ENCODE measurements at regions of chr1 and their contacts with region 1.

Region 1: DNA sequence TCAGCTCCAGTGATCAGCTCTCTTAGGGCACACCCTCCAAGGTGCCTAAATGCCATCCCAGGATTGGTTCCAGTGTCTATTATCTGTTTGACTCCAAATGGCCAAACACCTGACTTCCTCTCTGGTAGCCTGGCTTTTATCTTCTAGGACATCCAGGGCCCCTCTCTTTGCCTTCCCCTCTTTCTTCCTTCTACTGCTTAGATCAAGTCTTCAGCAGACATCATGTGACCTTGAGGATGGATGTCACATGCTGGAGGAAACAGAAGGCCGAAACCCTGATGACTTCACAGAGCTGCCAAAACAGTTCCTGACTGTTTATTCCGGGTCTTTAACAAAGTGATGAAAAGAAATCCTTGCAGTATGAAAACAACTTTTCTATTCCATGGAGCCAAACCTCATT is 24.4 kb upstream of the WDR26 start:
- DNase-seq: no peak
- H3K4me3 ChIP-seq: no peak overlapping the region
- H3K27ac ChIP-seq: no peak overlapping the region
- H3K27me3 ChIP-seq: no peaks in the 10 kb centered on the region
- CTCF ChIP-seq: no peak

Region 2: GRCh38 chr1:224116131-224116530 is 342.9 kb before region 1 on chr1:
- CTCF ChIA-PET with region 1: interaction called, 20 read pairs
- POLR2A ChIA-PET with region 1: no interaction called
- DNase-seq: peak; percentile 21
- H3K4me3 ChIP-seq: no peak overlapping the region; the same call in 1 of the 2 replicates
- H3K27ac ChIP-seq: no peak overlapping the region
- H3K27me3 ChIP-seq: no peaks in the 10 kb centered on the region
- CTCF ChIP-seq: peak; percentile 49

Region 3: DNA sequence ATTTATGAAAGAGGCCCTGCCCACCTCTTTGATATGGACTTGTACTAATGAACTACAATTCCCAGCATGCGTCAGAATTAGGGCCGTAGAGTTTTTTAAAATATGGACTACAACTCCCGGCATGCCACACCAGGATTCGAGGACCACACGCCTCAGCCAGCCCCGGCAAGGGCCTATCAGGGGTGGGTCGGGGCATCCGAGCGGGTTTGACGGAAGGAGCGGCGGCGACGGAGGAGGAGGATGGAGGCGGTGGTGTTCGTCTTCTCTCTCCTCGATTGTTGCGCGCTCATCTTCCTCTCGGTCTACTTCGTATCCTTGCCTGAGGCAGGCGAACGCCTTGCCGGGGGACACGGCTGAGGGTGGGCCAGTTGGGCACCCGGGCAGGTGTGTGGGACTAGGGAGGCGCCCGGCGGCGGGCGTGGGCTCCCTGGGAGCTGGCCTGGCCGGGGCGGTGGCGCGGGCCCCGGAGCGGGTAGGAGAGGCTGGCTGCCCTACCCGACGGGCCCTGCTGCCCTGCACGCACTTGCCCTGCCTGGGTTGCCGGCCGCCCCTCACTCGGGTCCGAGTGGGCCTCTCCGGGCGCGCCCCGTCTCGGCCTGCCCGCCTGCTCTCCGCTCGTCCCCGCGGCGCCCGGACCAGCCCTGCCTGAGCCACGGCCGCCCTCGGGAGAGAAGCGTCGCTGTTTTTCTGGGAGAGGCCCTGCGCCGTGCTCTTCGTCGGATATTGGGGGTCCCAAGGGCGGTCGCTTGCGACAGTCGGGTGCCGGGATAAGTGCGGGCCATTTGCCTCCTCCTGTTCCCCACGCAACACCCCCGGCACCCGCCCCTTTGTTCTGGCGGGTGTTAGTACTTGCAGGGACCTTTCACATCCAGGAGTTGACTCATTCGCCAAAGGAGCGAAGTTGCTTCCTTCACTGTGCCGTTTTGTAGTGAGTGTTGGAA is 102.0 kb before region 1 on chr1 and contains the start of gene CNIH4:
- CTCF ChIA-PET with region 1: interaction called, 12 read pairs
- POLR2A ChIA-PET with region 1: no interaction called
- DNase-seq: peak; percentile 85
- H3K4me3 ChIP-seq: peak within 1 kb of the TSS; percentile 84
- H3K27ac ChIP-seq: peak within 1 kb of the TSS; percentile 11
- H3K27me3 ChIP-seq: no peaks in the 10 kb centered on the region
- CTCF ChIP-seq: no peak
- polyA plus RNA-seq, gene CNIH4: 39.8 and 53.7 TPM in 2 replicates

Region 4: DNA sequence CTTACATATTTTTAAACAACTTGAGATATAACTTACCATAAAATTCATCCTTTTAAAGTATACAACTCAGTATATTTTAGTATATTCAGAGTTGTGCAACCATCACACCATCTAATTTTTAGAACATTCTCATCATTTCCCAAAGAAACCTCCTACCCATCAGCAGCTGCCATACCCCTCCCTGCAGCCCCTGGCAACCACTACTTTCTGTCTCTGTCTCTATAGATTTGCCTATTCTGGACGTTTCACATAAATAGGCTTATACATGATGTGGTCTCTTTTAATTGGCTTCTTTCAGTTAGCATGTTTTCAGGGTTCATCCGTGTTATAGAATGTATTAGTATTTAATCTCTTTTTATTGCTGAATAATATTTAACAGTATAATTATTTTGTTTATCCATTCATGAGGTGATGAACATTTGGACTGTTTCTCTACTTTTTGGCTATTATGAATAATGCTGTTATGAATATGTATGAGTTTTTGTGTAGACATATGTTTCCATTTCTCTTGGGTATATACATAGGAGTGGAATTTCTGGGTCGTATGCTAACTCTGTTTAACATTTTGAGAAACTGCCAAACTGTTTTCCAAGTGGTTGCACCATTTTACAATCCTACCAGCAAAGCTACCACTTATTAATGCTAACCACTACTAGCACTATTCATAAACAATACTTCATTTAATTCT is 53.9 kb before region 1 on chr1:
- CTCF ChIA-PET with region 1: interaction called, 10 read pairs
- POLR2A ChIA-PET with region 1: no interaction called
- DNase-seq: no peak
- H3K4me3 ChIP-seq: no peak overlapping the region
- H3K27ac ChIP-seq: no peak overlapping the region
- H3K27me3 ChIP-seq: no peaks in the 10 kb centered on the region
- CTCF ChIP-seq: no peak

Region 5: DNA sequence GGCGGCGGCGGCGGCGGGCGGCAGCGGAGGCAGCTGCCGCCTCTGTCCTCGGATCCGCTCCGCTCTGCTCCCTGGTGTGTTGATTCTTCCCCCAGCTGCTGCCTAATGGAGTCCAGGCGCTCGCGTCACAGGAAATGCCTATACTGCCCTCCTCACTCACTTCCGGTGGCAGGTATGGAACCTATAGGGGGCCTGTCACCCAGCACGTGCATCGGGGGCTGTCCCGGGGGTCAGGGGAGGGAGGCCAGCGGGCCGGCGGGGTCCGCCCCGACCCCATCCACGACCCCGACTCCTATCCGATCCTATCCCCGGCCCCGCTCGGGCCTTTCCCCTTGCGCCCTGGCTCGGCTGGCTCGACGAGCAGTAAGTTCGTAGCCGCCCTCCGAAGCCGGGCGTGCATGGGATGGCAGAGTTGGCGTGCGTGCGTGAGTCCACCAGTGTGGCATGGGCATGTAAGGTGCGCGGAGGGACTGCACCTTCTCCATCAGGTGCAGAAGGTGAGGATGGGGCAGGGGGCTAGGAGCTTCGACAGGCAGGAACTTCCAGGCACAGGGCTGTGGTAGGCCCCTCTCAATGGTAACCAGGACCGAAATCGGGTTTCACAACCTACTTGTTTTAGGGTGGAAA is 24.2 kb before region 1 on chr1 and contains the start of gene WDR26:
- CTCF ChIA-PET with region 1: interaction called, 24 read pairs
- POLR2A ChIA-PET with region 1: interaction called, 7 read pairs
- DNase-seq: no peak
- H3K4me3 ChIP-seq: peak within 1 kb of the TSS; percentile 87
- H3K27ac ChIP-seq: peak within 1 kb of the TSS; percentile 92
- H3K27me3 ChIP-seq: no peaks in the 10 kb centered on the region
- CTCF ChIP-seq: peak; percentile 13; the same call in 1 of the 2 replicates
- polyA plus RNA-seq, gene WDR26: 58.7 and 70.6 TPM in 2 replicates

Region 6: GRCh38 chr1:224472806-224473205 is 13.8 kb after region 1 on chr1:
- CTCF ChIA-PET with region 1: interaction called, 11 read pairs
- POLR2A ChIA-PET with region 1: no interaction called
- DNase-seq: no peak
- H3K4me3 ChIP-seq: no peak overlapping the region
- H3K27ac ChIP-seq: no peak overlapping the region
- H3K27me3 ChIP-seq: no peaks in the 10 kb centered on the region
- CTCF ChIP-seq: no peak

Region 7: GRCh38 chr1:224528900-224529299 is 69.9 kb after region 1 on chr1:
- CTCF ChIA-PET with region 1: no interaction called
- POLR2A ChIA-PET with region 1: no interaction called
- DNase-seq: peak; percentile 89
- H3K4me3 ChIP-seq: no peak overlapping the region
- H3K27ac ChIP-seq: peak overlapping the region; percentile 71
- H3K27me3 ChIP-seq: no peaks in the 10 kb centered on the region
- CTCF ChIP-seq: no peak